Naive thymus-derived CD8-positive, alpha-beta T cell (primary cell): ENCODE measurements at regions of chr5 and their contacts with region 1.

Region 1: GRCh38 chr5:61331407-61332357 is at the start of gene ZSWIM6:
- DNase-seq: peak; percentile 95 to 100 (median 99)
- ATAC-seq: peak; percentile 68 to 79
- H3K4me3 Mint-ChIP-seq: peak within 1 kb of the TSS; percentile 86 to 99 (median 94)
- H3K27ac Mint-ChIP-seq: peak within 1 kb of the TSS; percentile 77 to 100 (median 97)
- H3K4me1 Mint-ChIP-seq: peaks cover 33 to 53% (median 43%) of the 10 kb centered on the region in 4 donors
- H3K27me3 Mint-ChIP-seq: peaks cover 7 to 26% (median 12%) of the 10 kb centered on the region in 5 donors
- polyA plus RNA-seq, gene ZSWIM6: 0.14 to 0.59 (median 0.53) TPM

Region 2: DNA sequence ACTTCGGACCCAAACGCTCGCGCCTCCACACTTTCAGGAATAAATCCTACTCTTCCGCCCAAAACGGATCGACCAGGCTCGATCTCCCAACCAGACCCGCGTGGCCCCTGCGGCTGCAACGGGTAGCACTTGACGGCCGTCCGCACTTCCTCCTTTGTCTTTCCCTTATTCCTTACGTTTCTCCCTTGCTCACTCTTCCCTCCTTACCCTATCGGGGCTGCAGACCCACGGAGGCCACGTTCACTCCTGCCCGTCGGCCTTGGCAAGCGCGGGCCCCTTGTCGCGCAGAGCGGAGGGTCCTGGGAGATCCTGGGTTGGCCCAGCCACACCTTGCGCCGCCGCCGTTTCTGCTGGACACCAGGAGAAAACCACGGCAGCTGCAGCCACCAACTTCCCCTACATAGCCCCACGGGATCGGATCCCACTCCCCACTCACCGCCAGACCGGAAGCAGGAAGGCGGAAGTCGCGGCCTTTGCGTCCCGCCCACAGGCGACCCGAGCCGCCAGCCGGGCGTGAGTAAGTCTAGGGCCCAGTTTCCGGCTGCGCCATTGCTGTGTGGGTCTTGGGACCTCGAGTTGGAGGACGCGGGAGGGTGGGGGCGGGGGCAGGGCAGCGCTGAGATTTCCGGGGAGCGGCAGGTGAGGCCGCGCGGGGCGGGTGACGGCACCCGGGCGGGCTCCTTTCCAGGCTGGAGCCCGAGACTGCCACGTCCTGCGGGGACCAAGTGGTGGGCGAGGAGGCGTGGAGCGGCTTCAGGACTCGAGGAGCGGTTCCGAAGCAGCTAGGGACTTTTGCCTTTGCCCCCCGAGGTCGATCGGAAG is 169.5 kb before region 1 on chr5 and contains the start of gene SMIM15:
- POLR2A ChIA-PET with region 1: interaction called, 18 read pairs
- DNase-seq: peak; percentile 53 to 84 (median 70)
- ATAC-seq: peak; percentile 89 to 90
- H3K4me3 Mint-ChIP-seq: peak within 1 kb of the TSS; percentile 90 to 99 (median 96)
- H3K27ac Mint-ChIP-seq: peak within 1 kb of the TSS; percentile 94 to 99 (median 97)
- H3K4me1 Mint-ChIP-seq: peaks cover 14 to 44% (median 39%) of the 10 kb centered on the region in 4 donors
- H3K27me3 Mint-ChIP-seq: no peaks in the 10 kb centered on the region
- polyA plus RNA-seq, gene SMIM15: 21.0 to 38.0 (median 26.2) TPM

Region 3: DNA sequence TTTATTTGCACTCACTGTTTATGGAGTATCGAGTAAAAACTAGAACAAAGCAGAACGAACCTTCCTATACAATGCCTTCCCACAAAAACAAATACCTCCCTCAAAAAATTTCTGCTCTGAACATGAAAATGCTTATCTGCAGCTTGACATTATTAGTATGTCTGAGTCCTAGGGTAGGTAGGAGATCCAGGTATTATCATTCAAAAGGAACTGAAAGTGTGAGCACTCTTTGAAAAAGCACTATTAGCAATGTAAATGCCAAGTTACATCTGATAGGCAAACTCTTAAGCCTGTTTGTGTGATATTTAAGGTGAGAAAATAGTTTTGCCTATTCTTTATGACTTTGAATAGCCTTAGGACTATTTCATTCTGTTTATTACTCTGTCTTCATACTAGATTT is 48.0 kb after region 1 on chr5:
- POLR2A ChIA-PET with region 1: no interaction called
- DNase-seq: no peak
- ATAC-seq: no peak
- H3K4me3 Mint-ChIP-seq: no peak overlapping the region
- H3K27ac Mint-ChIP-seq: no peak overlapping the region
- H3K4me1 Mint-ChIP-seq: peaks cover 0 to 7% (median 5%) of the 10 kb centered on the region in 4 donors
- H3K27me3 Mint-ChIP-seq: no peaks in the 10 kb centered on the region

Region 4: GRCh38 chr5:61408476-61409168 is 76.9 kb after region 1 on chr5:
- POLR2A ChIA-PET with region 1: interaction called, 22 read pairs
- DNase-seq: peak; percentile 92 to 99 (median 98)
- ATAC-seq: peak; percentile 94 to 97
- H3K4me3 Mint-ChIP-seq: peak overlapping the region; percentile 78 to 94 (median 84)
- H3K27ac Mint-ChIP-seq: peak overlapping the region; percentile 77 to 97 (median 93)
- H3K4me1 Mint-ChIP-seq: peaks cover 8 to 45% (median 32%) of the 10 kb centered on the region in 4 donors
- H3K27me3 Mint-ChIP-seq: peaks cover 0 to 2% (median 0%) of the 10 kb centered on the region in 5 donors